ENCODE measurements at regions of chr18 and their contacts with region 1.

Region 1: GRCh38 chr18:70454704-70455322 is 166.0 kb downstream of the SOCS6 start:
- DNase-seq: peak; percentile 41
- H3K4me3 Mint-ChIP-seq: no peak overlapping the region
- H3K27ac Mint-ChIP-seq: no peak overlapping the region
- H3K4me1 Mint-ChIP-seq: no peaks in the 10 kb centered on the region
- H3K27me3 Mint-ChIP-seq: peaks cover 1% of the 10 kb centered on the region

Region 2: DNA sequence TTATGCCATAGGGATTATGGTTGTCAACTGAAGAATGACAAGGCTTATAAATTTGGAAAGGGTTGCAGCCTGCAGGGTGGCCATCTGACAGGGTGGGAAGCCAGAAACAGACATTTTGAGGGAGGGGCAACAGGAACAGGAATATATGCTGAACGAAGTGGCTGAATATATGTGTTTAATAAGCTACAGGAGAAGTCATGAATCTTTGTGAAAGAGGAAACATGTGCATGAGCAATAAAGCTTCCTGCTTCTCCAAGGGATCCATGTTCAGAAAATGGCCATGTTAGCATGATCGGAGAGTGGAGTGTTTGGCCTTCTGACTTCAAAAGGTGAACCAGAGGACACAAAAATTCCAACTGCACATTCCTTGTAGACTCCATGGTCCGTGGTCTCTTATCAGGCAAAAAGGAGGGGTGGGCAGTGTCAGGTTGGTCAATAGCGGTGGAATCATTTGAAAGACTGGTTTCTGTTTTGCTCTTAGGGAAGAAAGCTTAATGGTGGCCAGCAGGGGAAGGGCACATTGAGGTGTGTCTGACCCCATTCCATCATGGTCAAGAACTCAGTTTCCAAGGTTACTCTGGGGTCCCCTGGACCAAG is 21.9 kb before region 1 on chr18:
- CTCF ChIA-PET with region 1: interaction called, 13 read pairs
- DNase-seq: no peak
- H3K4me3 Mint-ChIP-seq: no peak overlapping the region
- H3K27ac Mint-ChIP-seq: no peak overlapping the region
- H3K4me1 Mint-ChIP-seq: no peaks in the 10 kb centered on the region
- H3K27me3 Mint-ChIP-seq: no peaks in the 10 kb centered on the region